Esophagus muscularis mucosa (tissue), 4 donors: ENCODE measurements at regions of chr16 and their contacts with region 1.

Region 1: GRCh38 chr16:50548125-50548908 is at the start of gene NKD1:
- DNase-seq: no peak
- H3K4me3 ChIP-seq: peak within 1 kb of the TSS; percentile 75 to 97 (median 84)
- H3K27ac ChIP-seq: peak within 1 kb of the TSS; percentile 84 to 90 (median 88)
- H3K4me1 ChIP-seq: peaks cover 7 to 57% (median 56%) of the 10 kb centered on the region in 4 donors
- H3K27me3 ChIP-seq: peaks cover 0 to 5% (median 0%) of the 10 kb centered on the region in 4 donors
- CTCF ChIP-seq: no peak
- EP300 ChIP-seq: no peak
- POLR2A ChIP-seq: no peak
- total RNA-seq, gene NKD1: 37.1 to 87.8 (median 54.1) TPM

Region 2: DNA sequence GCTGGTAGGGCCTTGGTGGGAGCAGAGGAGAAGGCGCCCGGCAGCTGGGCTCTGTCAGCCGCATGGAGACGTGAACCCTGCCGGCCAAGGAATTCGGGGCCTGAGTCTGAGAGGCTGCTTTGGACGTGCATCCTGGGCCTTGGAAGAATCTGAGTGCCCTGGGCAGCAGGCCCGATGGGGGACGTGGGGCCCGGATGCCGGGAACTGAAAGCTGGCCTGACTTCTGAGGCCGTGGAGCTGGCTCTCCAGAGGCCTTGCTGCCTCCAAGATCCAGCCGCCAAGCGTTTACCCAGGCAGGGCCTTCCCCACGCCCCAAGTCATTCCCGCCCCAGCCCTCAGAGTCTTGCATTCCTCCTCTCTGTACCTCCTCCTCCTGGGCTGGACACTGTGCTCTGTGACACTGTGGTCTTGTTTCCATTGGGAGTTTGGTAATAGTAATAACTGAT is 37.0 kb after region 1 on chr16:
- intact Hi-C with region 1: loop called (anchors 5 kb)
- DNase-seq: peak; percentile 93
- H3K4me3 ChIP-seq: peak overlapping the region in 1 of 4 donors; percentile 14
- H3K27ac ChIP-seq: peak overlapping the region; percentile 79 to 90 (median 84)
- H3K4me1 ChIP-seq: peaks cover 25 to 89% (median 71%) of the 10 kb centered on the region in 4 donors
- H3K27me3 ChIP-seq: no peaks in the 10 kb centered on the region
- CTCF ChIP-seq: no peak
- EP300 ChIP-seq: no peak
- POLR2A ChIP-seq: no peak

Region 3: DNA sequence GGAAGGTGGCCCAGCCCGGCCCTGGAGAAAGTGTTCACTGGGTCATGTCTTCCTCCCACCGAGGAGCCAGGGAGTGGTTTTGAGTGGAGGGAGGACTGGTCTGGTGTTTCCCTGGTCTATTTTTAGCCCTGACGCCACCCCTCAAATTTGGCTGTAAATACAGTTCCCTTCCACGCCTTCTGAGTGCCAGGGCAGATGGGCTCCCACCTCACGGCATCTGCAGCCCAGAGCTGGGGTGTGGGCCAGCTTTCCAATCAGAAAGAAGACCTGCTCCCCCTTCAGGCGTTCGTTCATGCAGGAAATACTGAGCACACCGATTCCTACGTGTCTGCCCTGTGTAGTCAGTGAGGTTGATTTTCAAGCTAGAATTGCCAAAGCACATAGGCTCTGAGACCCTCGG is 79.1 kb after region 1 on chr16:
- intact Hi-C with region 1: loop called (anchors 5 kb)
- DNase-seq: peak; percentile 94
- H3K4me3 ChIP-seq: no peak overlapping the region
- H3K27ac ChIP-seq: peak overlapping the region; percentile 44 to 66 (median 50)
- H3K4me1 ChIP-seq: peaks cover 11 to 41% (median 33%) of the 10 kb centered on the region in 4 donors
- H3K27me3 ChIP-seq: no peaks in the 10 kb centered on the region
- CTCF ChIP-seq: peak; percentile 44 to 72 (median 60)
- EP300 ChIP-seq: no peak
- POLR2A ChIP-seq: no peak

Region 4: GRCh38 chr16:50665128-50665878 is 117.0 kb after region 1 on chr16:
- intact Hi-C with region 1: loop called (anchors 10 kb)
- DNase-seq: peak; percentile 95
- H3K4me3 ChIP-seq: peak overlapping the region; percentile 52 to 62 (median 59)
- H3K27ac ChIP-seq: peak overlapping the region; percentile 70 to 82 (median 77)
- H3K4me1 ChIP-seq: peaks cover 10 to 31% (median 29%) of the 10 kb centered on the region in 4 donors
- H3K27me3 ChIP-seq: no peaks in the 10 kb centered on the region
- CTCF ChIP-seq: peak; percentile 89 to 90 (median 89)
- EP300 ChIP-seq: no peak
- POLR2A ChIP-seq: no peak